HCT116 (cell line): ENCODE measurements at regions of chr1 and their contacts with region 1.

Region 1: GRCh38 chr1:94335950-94336349 is 82.2 kb upstream of the ABCD3 start:
- DNase-seq: peak; percentile 93
- ATAC-seq: peak; percentile 89
- H3K4me3 ChIP-seq: no peak overlapping the region
- H3K27ac ChIP-seq: no peak overlapping the region
- H3K4me1 ChIP-seq: peaks cover 15 to 35% of the 10 kb centered on the region in 2 experiments
- H3K27me3 ChIP-seq: no peaks in the 10 kb centered on the region
- CTCF ChIP-seq: peak; percentile 67 to 100 (median 98)
- POLR2A ChIP-seq: no peak
- RAD21 ChIP-seq: peak; percentile 100

Region 2: GRCh38 chr1:94025383-94026340 is 310.3 kb before region 1 on chr1:
- CTCF ChIA-PET with region 1: interaction called, 338 read pairs
- POLR2A ChIA-PET with region 1: interaction called, 13 read pairs
- RAD21 ChIA-PET with region 1: interaction called, 21 to 42 read pairs
- intact Hi-C with region 1: loop called (anchors 1 kb)
- DNase-seq: peak; percentile 65
- ATAC-seq: peak; percentile 83
- H3K4me3 ChIP-seq: peak overlapping the region; percentile 34 to 54
- H3K27ac ChIP-seq: no peak overlapping the region
- H3K4me1 ChIP-seq: peaks cover 0 to 19% of the 10 kb centered on the region in 2 experiments; a peak in 2 of 4 replicates
- H3K27me3 ChIP-seq: no peaks in the 10 kb centered on the region
- CTCF ChIP-seq: peak; percentile 66 to 94 (median 84)
- POLR2A ChIP-seq: no peak
- RAD21 ChIP-seq: peak; percentile 84

Region 3: GRCh38 chr1:94045465-94046056 is 290.4 kb before region 1 on chr1:
- CTCF ChIA-PET with region 1: interaction called, 338 read pairs
- POLR2A ChIA-PET with region 1: interaction called, 8 read pairs
- RAD21 ChIA-PET with region 1: interaction called, 21 to 22 read pairs
- intact Hi-C with region 1: loop called (anchors 1 kb)
- DNase-seq: peak; percentile 91
- ATAC-seq: peak; percentile 93
- H3K4me3 ChIP-seq: no peak overlapping the region
- H3K27ac ChIP-seq: peak overlapping the region; percentile 27; the same call in 1 of the 2 replicates
- H3K4me1 ChIP-seq: peaks cover 16 to 20% of the 10 kb centered on the region in 2 experiments; a peak in 3 of 4 replicates
- H3K27me3 ChIP-seq: no peaks in the 10 kb centered on the region
- CTCF ChIP-seq: peak; percentile 71 to 98 (median 83)
- POLR2A ChIP-seq: no peak
- RAD21 ChIP-seq: peak; percentile 86

Region 4: DNA sequence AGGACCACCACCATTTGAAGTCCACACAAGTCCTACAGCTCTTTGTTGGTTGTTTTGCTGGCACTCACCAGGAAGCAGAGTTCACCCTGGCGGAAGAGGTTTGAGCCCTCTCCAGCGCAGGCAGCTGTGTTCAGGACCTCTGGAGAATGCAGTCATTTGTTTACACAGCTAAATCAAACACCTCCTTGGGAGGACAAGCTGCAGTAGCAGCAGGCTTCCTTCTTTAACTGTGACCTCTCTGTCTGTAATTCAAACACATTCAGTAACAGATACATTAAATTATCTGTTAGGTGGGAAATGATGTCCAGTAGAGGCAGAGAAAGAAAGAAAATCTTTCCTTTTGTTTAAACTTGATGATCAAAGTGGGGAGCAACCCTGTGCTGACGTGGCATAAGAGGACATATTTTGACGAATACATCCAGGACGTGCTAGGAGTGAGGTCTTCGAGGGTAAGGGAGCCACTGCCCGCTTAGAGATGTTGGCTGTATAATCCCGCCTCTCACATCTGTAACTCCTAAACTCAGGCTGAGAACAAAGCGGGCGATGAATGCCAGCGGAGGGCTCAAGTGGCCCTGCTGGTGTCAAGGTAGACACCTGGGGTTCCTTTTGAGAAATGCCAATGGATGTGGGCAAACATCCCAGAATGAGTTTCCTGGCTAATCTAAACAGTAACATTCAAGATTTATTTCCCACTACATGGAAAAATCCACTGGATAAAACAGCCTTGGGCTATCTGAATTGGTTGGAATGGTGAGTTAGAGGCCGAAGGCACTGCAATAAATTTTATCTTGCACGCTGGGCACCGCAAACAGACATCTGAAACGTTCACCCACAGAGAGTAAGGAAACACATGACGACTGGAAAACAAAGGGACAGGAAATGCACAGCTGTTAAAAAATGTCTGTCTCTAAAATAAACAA is 266.7 kb before region 1 on chr1:
- CTCF ChIA-PET with region 1: interaction called, 22 read pairs
- POLR2A ChIA-PET with region 1: interaction called, 38 read pairs
- RAD21 ChIA-PET with region 1: interaction called, 7 to 49 read pairs
- intact Hi-C with region 1: no loop called
- DNase-seq: no peak
- ATAC-seq: no peak; the same call in 1 of the 2 replicates
- H3K4me3 ChIP-seq: no peak overlapping the region
- H3K27ac ChIP-seq: peak overlapping the region; percentile 20; the same call in 1 of the 2 replicates
- H3K4me1 ChIP-seq: peaks cover 34 to 43% of the 10 kb centered on the region in 2 experiments
- H3K27me3 ChIP-seq: no peaks in the 10 kb centered on the region
- CTCF ChIP-seq: no peak
- POLR2A ChIP-seq: no peak
- RAD21 ChIP-seq: no peak

Region 5: DNA sequence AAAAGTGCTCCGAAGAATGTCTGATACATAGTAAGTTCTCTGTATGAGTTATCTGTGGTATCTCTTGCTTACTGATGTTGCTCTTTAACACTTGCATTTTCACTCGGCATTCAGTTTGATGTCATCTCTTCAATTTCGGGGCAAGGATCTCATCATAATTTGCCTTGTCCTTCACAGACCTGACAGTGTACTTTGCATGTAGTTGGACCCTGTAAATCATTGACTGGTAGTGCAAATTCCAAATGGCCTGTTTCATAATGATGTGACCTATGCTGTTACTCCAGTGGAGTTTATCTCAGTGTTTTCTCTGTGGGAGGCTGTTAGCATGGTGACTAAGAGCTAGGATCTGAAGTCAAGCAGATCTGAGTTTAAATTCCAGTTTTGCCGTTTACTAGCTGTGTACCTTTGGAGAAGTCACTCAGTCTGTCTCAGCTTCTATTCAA is 48.0 kb after region 1 on chr1:
- CTCF ChIA-PET with region 1: no interaction called
- POLR2A ChIA-PET with region 1: no interaction called
- RAD21 ChIA-PET with region 1: no interaction called
- intact Hi-C with region 1: no loop called
- DNase-seq: no peak
- ATAC-seq: no peak
- H3K4me3 ChIP-seq: no peak overlapping the region
- H3K27ac ChIP-seq: no peak overlapping the region
- H3K4me1 ChIP-seq: peaks cover 0 to 4% of the 10 kb centered on the region in 2 experiments; a peak in 1 of 4 replicates
- H3K27me3 ChIP-seq: no peaks in the 10 kb centered on the region
- CTCF ChIP-seq: no peak
- POLR2A ChIP-seq: no peak
- RAD21 ChIP-seq: no peak

Region 6: DNA sequence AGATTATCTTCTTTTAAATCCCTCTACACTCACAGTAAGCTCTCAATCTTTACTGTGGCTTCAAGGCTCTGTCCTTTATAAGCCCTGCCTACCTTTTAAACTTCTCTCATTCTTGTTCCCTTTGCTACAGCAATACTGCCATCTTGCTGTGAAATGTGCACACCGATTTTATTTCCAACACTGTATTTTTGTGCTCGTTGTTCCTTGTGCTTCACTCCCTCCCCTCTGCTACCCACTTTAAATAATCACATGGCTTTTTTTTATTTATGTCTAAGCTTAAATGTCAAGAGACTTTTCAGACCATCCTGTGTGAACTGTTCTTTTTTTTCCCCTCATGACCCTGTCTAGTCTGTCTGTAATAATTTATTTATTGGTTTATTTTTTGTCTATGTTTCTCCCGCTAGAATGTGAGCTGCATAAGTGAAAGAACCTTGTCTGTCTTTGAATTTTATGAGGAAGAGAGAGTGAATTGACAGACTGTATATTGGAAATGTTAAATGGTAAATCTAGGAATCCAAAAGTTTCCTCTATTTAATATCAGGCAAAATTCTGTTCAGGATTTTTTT is 127.9 kb after region 1 on chr1:
- CTCF ChIA-PET with region 1: interaction called, 29 read pairs
- POLR2A ChIA-PET with region 1: no interaction called
- RAD21 ChIA-PET with region 1: interaction called, 3 to 4 read pairs
- intact Hi-C with region 1: loop called (anchors 1 kb)
- DNase-seq: peak; percentile 49
- ATAC-seq: peak; percentile 84
- H3K4me3 ChIP-seq: no peak overlapping the region
- H3K27ac ChIP-seq: no peak overlapping the region
- H3K4me1 ChIP-seq: no peaks in the 10 kb centered on the region
- H3K27me3 ChIP-seq: no peaks in the 10 kb centered on the region
- CTCF ChIP-seq: peak; percentile 55 to 79 (median 66); a peak in 5 of 6 replicates
- POLR2A ChIP-seq: no peak
- RAD21 ChIP-seq: peak; percentile 86